ENCODE measurements at regions of chr14 and their contacts with region 1.

Region 1: GRCh38 chr14:74018586-74019407 is at the starts of genes BBOF1 and ENTPD5:
- DNase-seq: peak; percentile 93
- ATAC-seq: peak; percentile 87
- H3K4me3 ChIP-seq: peak within 1 kb of the TSS; percentile 75
- H3K27ac ChIP-seq: peak within 1 kb of the TSS; percentile 71
- H3K4me1 ChIP-seq: peaks cover 12% of the 10 kb centered on the region; the same call in 1 of the 2 replicates
- H3K27me3 ChIP-seq: no peaks in the 10 kb centered on the region
- CTCF ChIP-seq: no peak
- total RNA-seq, gene BBOF1: 1.5 and 3.9 TPM in 2 replicates
- total RNA-seq, gene ENTPD5: 7.9 and 11.2 TPM in 2 replicates

Region 2: DNA sequence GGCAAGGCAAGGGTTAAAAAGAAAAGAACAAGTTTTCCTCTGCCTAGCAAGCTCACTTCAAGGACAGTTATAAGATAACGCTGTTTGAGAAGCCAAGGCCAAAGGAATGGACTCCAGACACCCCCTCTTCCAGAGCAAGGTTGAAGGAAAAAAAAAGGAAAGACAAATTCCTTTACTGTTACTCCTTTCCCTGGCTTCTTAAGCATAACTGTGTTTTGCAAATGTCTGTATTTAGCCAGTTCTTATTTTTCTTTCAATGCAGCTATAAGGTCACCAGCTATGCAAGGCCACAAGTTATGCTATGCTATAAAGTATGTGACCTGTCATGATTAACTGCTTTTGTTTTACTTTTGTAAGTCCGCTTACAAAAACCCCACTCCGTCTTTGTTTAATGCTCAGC is 105.5 kb before region 1 on chr14:
- CTCF ChIA-PET with region 1: no interaction called
- POLR2A ChIA-PET with region 1: no interaction called
- intact Hi-C with region 1: no loop called
- DNase-seq: no peak
- ATAC-seq: no peak
- H3K4me3 ChIP-seq: no peak overlapping the region
- H3K27ac ChIP-seq: no peak overlapping the region
- H3K4me1 ChIP-seq: peaks cover 6% of the 10 kb centered on the region
- H3K27me3 ChIP-seq: no peaks in the 10 kb centered on the region
- CTCF ChIP-seq: no peak

Region 3: GRCh38 chr14:73949744-73950734 is 68.8 kb before region 1 on chr14 and contains the starts of genes COQ6 and FAM161B:
- CTCF ChIA-PET with region 1: interaction called, 6 read pairs
- POLR2A ChIA-PET with region 1: no interaction called
- intact Hi-C with region 1: loop called (anchors 1 kb)
- DNase-seq: peak; percentile 99
- ATAC-seq: peak; percentile 97
- H3K4me3 ChIP-seq: peak within 1 kb of the TSS; percentile 91
- H3K27ac ChIP-seq: peak within 1 kb of the TSS; percentile 70
- H3K4me1 ChIP-seq: no peaks in the 10 kb centered on the region
- H3K27me3 ChIP-seq: no peaks in the 10 kb centered on the region
- CTCF ChIP-seq: no peak
- total RNA-seq, gene COQ6: 33.2 and 40.3 TPM in 2 replicates
- total RNA-seq, gene FAM161B: 2.8 and 3.5 TPM in 2 replicates

Region 4: DNA sequence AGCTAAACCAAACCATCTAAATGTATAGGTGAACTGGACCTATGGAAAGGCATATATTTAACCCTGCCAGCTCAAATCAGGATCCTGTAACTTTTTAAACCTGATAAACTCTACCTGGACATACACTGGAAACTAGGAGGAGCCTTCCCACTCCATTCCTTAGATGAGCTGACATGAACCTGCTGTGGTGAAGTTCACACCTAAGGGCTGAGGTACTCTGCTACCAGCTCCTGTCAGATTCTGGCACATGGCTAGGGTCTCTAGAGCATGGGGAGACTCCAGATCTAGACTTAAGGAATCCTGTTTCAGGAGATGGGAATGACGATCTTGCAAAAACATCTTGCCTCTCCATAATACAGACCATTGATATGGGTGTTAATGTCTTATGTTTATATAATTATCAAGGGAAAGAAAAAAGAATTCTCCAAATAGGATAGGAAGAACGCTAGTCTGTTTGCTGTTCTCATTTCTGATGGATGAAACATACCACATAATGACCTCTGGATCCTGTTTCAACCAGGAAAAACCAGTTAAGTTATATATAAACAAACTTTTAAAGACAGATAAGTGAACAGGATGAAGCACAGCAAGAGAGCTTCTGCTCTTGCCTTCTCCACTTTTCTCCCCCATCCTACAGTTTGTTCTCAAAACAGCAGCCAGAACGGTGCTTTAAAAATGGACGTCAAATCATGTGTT is 41.0 kb before region 1 on chr14:
- CTCF ChIA-PET with region 1: interaction called, 3 read pairs
- POLR2A ChIA-PET with region 1: no interaction called
- intact Hi-C with region 1: loop called (anchors 2 kb)
- DNase-seq: peak; percentile 68
- ATAC-seq: peak; percentile 91
- H3K4me3 ChIP-seq: no peak overlapping the region
- H3K27ac ChIP-seq: no peak overlapping the region
- H3K4me1 ChIP-seq: peaks cover 18% of the 10 kb centered on the region
- H3K27me3 ChIP-seq: no peaks in the 10 kb centered on the region
- CTCF ChIP-seq: no peak

Region 5: DNA sequence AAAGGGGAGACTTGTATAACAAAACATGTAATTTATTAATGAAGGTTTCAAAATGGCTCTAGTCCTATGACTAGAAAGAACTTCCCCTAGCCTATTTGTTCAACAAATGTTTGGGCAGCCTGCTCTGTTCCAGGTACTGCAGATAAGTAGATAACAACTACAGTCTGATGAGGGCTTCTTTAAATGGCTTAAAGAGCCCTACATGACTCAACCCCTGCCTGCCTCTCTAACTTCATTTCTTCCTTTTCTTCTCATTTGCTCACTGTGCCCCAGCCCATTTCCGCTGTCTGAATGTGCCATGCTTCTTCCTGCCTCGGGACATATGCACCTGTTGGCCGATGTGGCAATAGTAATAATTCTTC is 44.0 kb after region 1 on chr14:
- CTCF ChIA-PET with region 1: no interaction called
- POLR2A ChIA-PET with region 1: interaction called, 4 read pairs
- intact Hi-C with region 1: loop called (anchors 1 kb)
- DNase-seq: peak; percentile 68
- ATAC-seq: peak; percentile 70
- H3K4me3 ChIP-seq: no peak overlapping the region
- H3K27ac ChIP-seq: peak overlapping the region; percentile 58
- H3K4me1 ChIP-seq: peaks cover 27% of the 10 kb centered on the region
- H3K27me3 ChIP-seq: no peaks in the 10 kb centered on the region
- CTCF ChIP-seq: no peak

Region 6: DNA sequence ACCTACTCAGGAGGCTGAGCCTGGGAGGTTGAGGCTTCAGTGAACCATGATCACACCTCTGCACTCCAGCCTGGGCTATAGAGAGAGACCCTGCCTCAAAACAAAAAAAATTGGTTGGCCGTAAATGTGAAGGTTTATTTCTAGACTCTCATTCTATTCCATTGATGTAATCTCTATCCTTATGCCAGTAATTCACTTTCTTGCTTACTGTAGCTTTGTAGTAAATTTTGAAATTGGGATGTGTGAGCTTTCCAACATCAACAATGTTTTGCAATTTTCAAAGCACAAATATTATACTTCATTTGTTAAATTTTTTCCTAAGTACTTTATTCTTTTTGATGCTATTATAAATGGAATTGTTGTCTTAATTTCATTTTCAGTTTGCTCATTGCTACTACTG is 90.6 kb after region 1 on chr14:
- CTCF ChIA-PET with region 1: no interaction called
- POLR2A ChIA-PET with region 1: no interaction called
- intact Hi-C with region 1: no loop called
- DNase-seq: no peak
- ATAC-seq: no peak
- H3K4me3 ChIP-seq: no peak overlapping the region
- H3K27ac ChIP-seq: no peak overlapping the region
- H3K4me1 ChIP-seq: no peaks in the 10 kb centered on the region
- H3K27me3 ChIP-seq: no peaks in the 10 kb centered on the region
- CTCF ChIP-seq: no peak

Measured in PC-3 (cell line).